ENCODE measurements at regions of chr17 and their contacts with region 1.

Region 1: DNA sequence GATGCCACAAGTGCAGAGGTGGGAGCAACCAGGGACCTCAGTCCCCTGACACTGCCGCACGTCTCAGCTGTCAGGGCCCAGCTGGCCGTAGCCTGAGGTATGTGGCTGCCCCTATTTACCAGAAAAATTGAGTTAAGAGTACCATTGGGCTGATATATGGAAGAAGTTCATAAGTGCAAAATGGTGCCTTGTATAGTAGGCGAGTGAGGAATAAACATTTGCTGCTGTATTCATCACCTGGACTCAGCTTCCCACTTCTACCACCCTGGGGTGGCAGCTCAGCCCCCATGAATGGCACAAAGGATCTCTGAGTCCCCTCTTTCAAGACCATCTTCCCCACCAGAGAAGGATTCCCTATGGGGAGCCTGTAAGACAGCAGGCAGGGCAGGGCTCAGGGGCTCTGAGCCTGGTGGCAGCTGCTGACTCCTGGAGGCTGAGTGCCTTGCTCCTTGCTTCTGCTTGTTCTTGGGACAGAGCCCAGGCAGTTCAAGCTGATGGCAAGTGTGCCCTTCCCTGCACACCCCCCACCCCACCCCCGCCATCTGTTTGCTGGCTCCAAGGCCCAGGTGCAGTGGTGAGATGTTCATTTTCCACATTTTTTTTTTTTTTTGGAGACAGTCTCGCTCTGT is 29.0 kb downstream of the TRPV2 start:
- DNase-seq: no peak
- H3K4me3 ChIP-seq: no peak overlapping the region
- H3K27ac ChIP-seq: no peak overlapping the region
- H3K4me1 ChIP-seq: peaks cover 0 to 15% (median 7%) of the 10 kb centered on the region in 4 experiments; a peak in 5 of 7 replicates
- H3K27me3 ChIP-seq: no peaks in the 10 kb centered on the region
- CTCF ChIP-seq: no peak
- EP300 ChIP-seq: no peak
- POLR2A ChIP-seq: peak; percentile 47 to 82; a peak in 2 of 3 replicates
- RAD21 ChIP-seq: no peak

Region 2: DNA sequence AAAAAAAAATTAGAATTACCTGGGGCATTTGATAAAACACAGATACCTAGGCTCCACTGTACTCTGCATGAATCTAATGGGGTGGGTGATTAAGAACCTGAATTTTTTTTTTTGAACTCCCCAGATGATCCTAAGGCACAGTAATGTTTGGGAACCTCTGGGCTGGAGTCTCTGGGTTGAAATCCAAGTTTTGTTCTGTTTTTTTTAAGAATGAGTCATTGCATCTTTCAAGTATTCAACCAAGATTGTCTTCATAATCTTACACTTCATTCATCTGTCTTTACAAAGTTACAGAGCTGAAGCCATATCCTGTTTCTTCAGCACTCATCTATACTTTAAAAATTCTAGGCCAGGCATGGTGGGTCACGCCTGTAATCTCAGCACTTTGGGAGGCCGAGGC is 174.7 kb before region 1 on chr17:
- CTCF ChIA-PET with region 1: no interaction called
- POLR2A ChIA-PET with region 1: no interaction called
- DNase-seq: no peak
- H3K4me3 ChIP-seq: no peak overlapping the region
- H3K27ac ChIP-seq: no peak overlapping the region
- H3K4me1 ChIP-seq: no peaks in the 10 kb centered on the region
- H3K27me3 ChIP-seq: no peaks in the 10 kb centered on the region
- CTCF ChIP-seq: no peak
- EP300 ChIP-seq: no peak
- POLR2A ChIP-seq: no peak
- RAD21 ChIP-seq: no peak

Region 3: GRCh38 chr17:16353317-16354174 is 90.8 kb before region 1 on chr17 and contains the start of gene CENPV:
- CTCF ChIA-PET with region 1: interaction called, 3 read pairs
- POLR2A ChIA-PET with region 1: interaction called, 23 read pairs
- DNase-seq: peak; percentile 54 to 88
- H3K4me3 ChIP-seq: peak within 1 kb of the TSS; percentile 78 to 95 (median 86)
- H3K27ac ChIP-seq: peak within 1 kb of the TSS; percentile 55
- H3K4me1 ChIP-seq: 0 out of 7 replicates have a peak, but pooled peaks cover 0 to 2% (median 0%) of the 10 kb centered on the region in 4 experiments
- H3K27me3 ChIP-seq: no peaks in the 10 kb centered on the region; a peak in 1 of 7 replicates
- CTCF ChIP-seq: peak; percentile 13 to 32 (median 14); a peak in 3 of 4 replicates
- EP300 ChIP-seq: no peak
- POLR2A ChIP-seq: peak; percentile 54 to 56; a peak in 2 of 3 replicates
- RAD21 ChIP-seq: no peak
- total RNA-seq, gene CENPV: 249 and 255 TPM in 2 replicates

Region 4: DNA sequence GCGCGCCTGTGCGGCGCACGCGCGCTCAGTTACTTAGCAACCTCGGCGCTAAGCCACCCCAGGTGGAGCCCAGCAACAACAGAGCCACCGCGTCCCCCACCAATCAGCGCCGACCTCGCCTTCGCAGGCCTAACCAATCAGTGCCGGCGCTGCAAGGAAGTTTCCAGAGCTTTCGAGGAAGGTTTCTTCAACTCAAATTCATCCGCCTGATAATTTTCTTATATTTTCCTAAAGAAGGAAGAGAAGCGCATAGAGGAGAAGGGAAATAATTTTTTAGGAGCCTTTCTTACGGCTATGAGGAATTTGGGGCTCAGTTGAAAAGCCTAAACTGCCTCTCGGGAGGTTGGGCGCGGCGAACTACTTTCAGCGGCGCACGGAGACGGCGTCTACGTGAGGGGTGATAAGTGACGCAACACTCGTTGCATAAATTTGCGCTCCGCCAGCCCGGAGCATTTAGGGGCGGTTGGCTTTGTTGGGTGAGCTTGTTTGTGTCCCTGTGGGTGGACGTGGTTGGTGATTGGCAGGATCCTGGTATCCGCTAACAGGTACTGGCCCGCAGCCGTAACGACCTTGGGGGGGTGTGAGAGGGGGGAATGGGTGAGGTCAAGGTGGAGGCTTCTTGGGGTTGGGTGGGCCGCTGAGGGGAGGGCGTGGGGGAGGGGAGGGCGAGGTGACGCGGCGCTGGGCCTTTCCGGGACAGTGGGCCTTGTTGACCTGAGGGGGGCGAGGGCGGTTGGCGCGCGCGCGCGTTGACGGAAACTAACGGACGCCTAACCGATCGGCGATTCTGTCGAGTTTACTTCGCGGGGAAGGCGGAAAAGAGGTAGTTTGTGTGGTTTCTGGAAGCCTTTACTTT is 63.5 kb before region 1 on chr17 and contains the start of gene UBB:
- CTCF ChIA-PET with region 1: interaction called, 3 read pairs
- POLR2A ChIA-PET with region 1: interaction called, 120 read pairs
- DNase-seq: peak; percentile 93 to 98
- H3K4me3 ChIP-seq: peak within 1 kb of the TSS; percentile 85 to 95 (median 92)
- H3K27ac ChIP-seq: peak within 1 kb of the TSS; percentile 97
- H3K4me1 ChIP-seq: peaks cover 0 to 2% (median 0%) of the 10 kb centered on the region in 4 experiments; a peak in 4 of 7 replicates
- H3K27me3 ChIP-seq: no peaks in the 10 kb centered on the region
- CTCF ChIP-seq: peak in 1 of 3 experiments; percentile 14; a peak in 1 of 4 replicates
- EP300 ChIP-seq: peak; percentile 19 to 22; a peak in 2 of 3 replicates
- POLR2A ChIP-seq: peak; percentile 96 to 99
- RAD21 ChIP-seq: no peak; a peak in 1 of 4 replicates
- total RNA-seq, gene UBB: 1,585 and 1,597 TPM in 2 replicates

Region 5: DNA sequence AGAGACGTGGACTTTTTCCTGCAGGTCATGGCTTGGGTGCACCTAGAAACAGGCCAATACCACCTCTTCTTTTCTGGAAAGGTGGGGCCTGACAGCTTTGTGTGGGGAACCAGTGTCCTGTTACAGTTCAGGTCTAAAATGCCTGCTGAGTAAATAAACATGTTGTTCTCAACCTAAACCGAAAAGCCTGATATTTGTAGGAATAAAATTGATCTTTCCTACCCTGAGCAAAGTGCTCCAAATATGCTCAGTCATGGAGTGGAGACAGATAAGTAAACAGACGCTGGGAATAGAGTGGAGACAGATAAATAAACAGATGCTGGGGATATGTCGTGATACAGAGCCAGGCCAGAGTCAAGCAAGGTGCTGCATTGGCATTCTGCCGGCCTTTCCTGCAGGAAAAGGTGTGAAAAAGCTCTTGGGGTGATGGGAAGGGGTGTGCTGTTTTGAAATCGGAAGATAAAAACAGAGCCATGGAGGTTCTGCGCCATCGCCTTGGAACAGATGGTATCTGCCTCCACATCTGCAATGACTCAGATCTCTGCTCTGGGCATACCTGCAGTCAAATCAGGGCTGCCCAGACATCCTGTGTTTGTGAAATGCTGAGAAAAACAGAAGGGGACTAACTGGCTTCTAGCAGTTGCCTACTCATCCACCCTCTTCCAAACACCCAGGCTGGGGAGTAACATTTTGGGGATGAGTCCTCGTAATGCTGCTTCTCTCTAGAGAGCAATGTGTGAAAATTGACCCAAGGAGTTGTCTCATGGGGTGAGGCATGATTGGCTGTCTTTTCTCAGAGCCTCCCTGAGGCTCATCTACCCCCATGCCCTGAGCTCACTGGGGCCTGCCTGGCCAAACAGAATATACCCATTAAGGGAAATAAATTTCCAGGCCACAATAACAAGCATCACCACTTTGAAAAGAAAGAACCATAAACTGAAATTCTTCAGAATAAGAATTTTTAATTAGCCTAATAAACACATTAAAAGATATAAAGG is 45.8 kb before region 1 on chr17:
- CTCF ChIA-PET with region 1: interaction called, 4 read pairs
- POLR2A ChIA-PET with region 1: interaction called, 12 read pairs
- DNase-seq: no peak
- H3K4me3 ChIP-seq: no peak overlapping the region
- H3K27ac ChIP-seq: no peak overlapping the region; the same call in 1 of the 2 replicates
- H3K4me1 ChIP-seq: peaks cover 0 to 4% (median 3%) of the 10 kb centered on the region in 4 experiments; a peak in 3 of 7 replicates
- H3K27me3 ChIP-seq: no peaks in the 10 kb centered on the region
- CTCF ChIP-seq: no peak
- EP300 ChIP-seq: no peak
- POLR2A ChIP-seq: no peak
- RAD21 ChIP-seq: no peak

Region 6: GRCh38 chr17:16428098-16428882 is 16.1 kb before region 1 on chr17:
- CTCF ChIA-PET with region 1: interaction called, 7 read pairs
- POLR2A ChIA-PET with region 1: interaction called, 75 read pairs
- DNase-seq: peak in 1 of 2 experiments; percentile 44
- H3K4me3 ChIP-seq: no peak overlapping the region
- H3K27ac ChIP-seq: no peak overlapping the region
- H3K4me1 ChIP-seq: no peaks in the 10 kb centered on the region
- H3K27me3 ChIP-seq: no peaks in the 10 kb centered on the region; a peak in 1 of 7 replicates
- CTCF ChIP-seq: peak; percentile 62 to 82 (median 81)
- EP300 ChIP-seq: no peak
- POLR2A ChIP-seq: no peak
- RAD21 ChIP-seq: peak; percentile 40 to 52

Region 7: GRCh38 chr17:16456742-16457316 is 12.5 kb after region 1 on chr17:
- CTCF ChIA-PET with region 1: interaction called, 22 read pairs
- POLR2A ChIA-PET with region 1: interaction called, 204 read pairs
- DNase-seq: no peak
- H3K4me3 ChIP-seq: no peak overlapping the region
- H3K27ac ChIP-seq: no peak overlapping the region
- H3K4me1 ChIP-seq: peaks cover 6 to 16% (median 12%) of the 10 kb centered on the region in 4 experiments
- H3K27me3 ChIP-seq: no peaks in the 10 kb centered on the region
- CTCF ChIP-seq: peak; percentile 37 to 42 (median 37)
- EP300 ChIP-seq: no peak
- POLR2A ChIP-seq: no peak
- RAD21 ChIP-seq: peak; percentile 53 to 65

Region 8: GRCh38 chr17:16486373-16487250 is 42.2 kb after region 1 on chr17:
- CTCF ChIA-PET with region 1: interaction called, 3 read pairs
- POLR2A ChIA-PET with region 1: interaction called, 17 read pairs
- DNase-seq: peak in 1 of 2 experiments; percentile 65
- H3K4me3 ChIP-seq: no peak overlapping the region
- H3K27ac ChIP-seq: peak overlapping the region; percentile 52; the same call in 1 of the 2 replicates
- H3K4me1 ChIP-seq: peaks cover 20 to 64% (median 52%) of the 10 kb centered on the region in 4 experiments
- H3K27me3 ChIP-seq: peaks cover 0 to 14% (median 8%) of the 10 kb centered on the region in 4 experiments; a peak in 2 of 7 replicates
- CTCF ChIP-seq: no peak
- EP300 ChIP-seq: no peak
- POLR2A ChIP-seq: 0 out of 3 replicates have a peak, but pooled peaks of 1 of the 2 experiments have one; percentile 22
- RAD21 ChIP-seq: no peak

Measured in H1 (cell line).